ENCODE measurements at regions of chr14 and their contacts with region 1.

Region 1: DNA sequence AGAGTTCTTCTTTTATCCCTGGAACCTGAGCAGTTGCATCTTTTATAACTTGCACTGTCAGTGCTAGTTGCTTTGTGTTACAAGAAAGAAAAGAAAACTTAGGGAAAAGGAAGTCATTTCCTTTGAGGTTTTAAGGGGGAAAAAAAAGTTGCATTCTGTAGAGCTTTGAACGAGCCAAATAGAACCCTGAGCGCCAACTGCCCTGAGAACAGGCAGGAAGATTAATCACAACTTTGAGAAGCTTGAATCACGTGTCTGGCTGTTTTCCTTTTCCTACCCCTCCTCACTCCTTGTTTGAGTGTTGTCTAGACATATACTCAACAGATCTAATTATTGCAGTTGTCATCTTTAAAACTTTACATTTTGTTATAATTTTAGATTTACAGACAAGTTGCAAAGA is 12.5 kb downstream of the PCNX1 start:
- DNase-seq: peak in 1 of 9 donors; percentile 18
- ATAC-seq: peak; percentile 36
- H3K4me3 ChIP-seq: no peak overlapping the region
- H3K4me3 Mint-ChIP-seq: peak overlapping the region in 9 of 10 donors; percentile 43 to 80 (median 71)
- H3K27ac ChIP-seq: no peak overlapping the region
- H3K27ac Mint-ChIP-seq: peak overlapping the region; percentile 56 to 84 (median 77)
- H3K4me1 ChIP-seq: peaks cover 51 to 66% of the 10 kb centered on the region in 2 donors
- H3K4me1 Mint-ChIP-seq: peaks cover 55 to 99% (median 90%) of the 10 kb centered on the region in 7 donors
- H3K27me3 ChIP-seq: no peaks in the 10 kb centered on the region
- H3K27me3 Mint-ChIP-seq: no peaks in the 10 kb centered on the region

Region 2: GRCh38 chr14:70013269-70013873 is 906.4 kb before region 1 on chr14:
- CTCF ChIA-PET with region 1: no interaction called
- POLR2A ChIA-PET with region 1: no interaction called
- intact Hi-C with region 1: no loop called
- DNase-seq: peak in 1 of 9 donors; percentile 36
- ATAC-seq: no peak
- H3K4me3 ChIP-seq: no peak overlapping the region
- H3K4me3 Mint-ChIP-seq: no peak overlapping the region
- H3K27ac ChIP-seq: no peak overlapping the region
- H3K27ac Mint-ChIP-seq: no peak overlapping the region
- H3K4me1 ChIP-seq: no peaks in the 10 kb centered on the region
- H3K4me1 Mint-ChIP-seq: peaks cover 0 to 10% (median 5%) of the 10 kb centered on the region in 7 donors
- H3K27me3 ChIP-seq: no peaks in the 10 kb centered on the region
- H3K27me3 Mint-ChIP-seq: peaks cover 7 to 21% (median 14%) of the 10 kb centered on the region in 5 donors

Region 3: GRCh38 chr14:70254476-70254961 is 665.3 kb before region 1 on chr14:
- CTCF ChIA-PET with region 1: no interaction called
- POLR2A ChIA-PET with region 1: no interaction called
- intact Hi-C with region 1: no loop called
- DNase-seq: peak in 2 of 9 donors; percentile 1 to 11
- ATAC-seq: peak; percentile 54
- H3K4me3 ChIP-seq: no peak overlapping the region
- H3K4me3 Mint-ChIP-seq: peak overlapping the region in 6 of 10 donors; percentile 30 to 78 (median 36)
- H3K27ac ChIP-seq: no peak overlapping the region
- H3K27ac Mint-ChIP-seq: no peak overlapping the region
- H3K4me1 ChIP-seq: no peaks in the 10 kb centered on the region
- H3K4me1 Mint-ChIP-seq: peaks cover 4 to 15% (median 8%) of the 10 kb centered on the region in 7 donors
- H3K27me3 ChIP-seq: no peaks in the 10 kb centered on the region
- H3K27me3 Mint-ChIP-seq: peaks cover 61 to 73% (median 65%) of the 10 kb centered on the region in 5 donors

Region 4: GRCh38 chr14:70809543-70810244 is 110.1 kb before region 1 on chr14:
- CTCF ChIA-PET with region 1: no interaction called
- POLR2A ChIA-PET with region 1: no interaction called
- intact Hi-C with region 1: no loop called
- DNase-seq: peak; percentile 68 to 87 (median 78)
- ATAC-seq: peak; percentile 90
- H3K4me3 ChIP-seq: peak overlapping the region; percentile 73
- H3K4me3 Mint-ChIP-seq: peak overlapping the region in 1 of 10 donors; percentile 87
- H3K27ac ChIP-seq: peak overlapping the region; percentile 65
- H3K27ac Mint-ChIP-seq: peak overlapping the region in 6 of 9 donors; percentile 79 to 92 (median 88)
- H3K4me1 ChIP-seq: peaks cover 3 to 10% of the 10 kb centered on the region in 2 donors
- H3K4me1 Mint-ChIP-seq: peaks cover 9 to 17% (median 13%) of the 10 kb centered on the region in 7 donors
- H3K27me3 ChIP-seq: no peaks in the 10 kb centered on the region
- H3K27me3 Mint-ChIP-seq: peaks cover 0 to 9% (median 4%) of the 10 kb centered on the region in 5 donors

Region 5: DNA sequence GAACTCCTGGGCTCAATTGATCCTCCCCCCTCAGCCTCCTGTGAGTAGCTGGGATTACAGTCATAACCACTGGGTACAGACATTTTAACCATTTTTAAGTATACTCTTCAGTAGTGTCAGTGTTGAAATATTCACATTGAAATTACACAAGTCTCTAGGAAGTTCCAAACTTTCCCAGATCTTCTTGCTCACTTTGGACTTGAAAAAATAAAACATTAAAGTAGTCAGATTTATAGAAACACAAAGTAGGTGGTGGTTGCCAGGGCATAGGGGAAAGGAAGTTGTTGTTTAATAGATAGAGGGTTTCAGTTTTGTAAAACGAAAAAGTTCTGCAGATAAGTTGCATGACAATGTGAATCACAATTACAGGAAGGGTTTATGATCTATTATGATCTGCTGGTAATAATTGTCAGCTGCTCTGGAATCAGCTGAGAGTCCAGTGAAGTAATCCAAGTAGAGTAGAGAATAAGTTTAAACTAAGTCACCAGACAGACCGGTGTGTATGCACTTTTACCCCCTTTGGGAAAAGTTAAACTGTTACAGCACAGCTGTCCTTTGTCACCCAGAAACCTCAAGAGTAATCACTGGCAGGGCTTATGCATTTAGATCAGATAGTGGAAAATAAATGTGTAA is 14.8 kb after region 1 on chr14:
- CTCF ChIA-PET with region 1: no interaction called
- POLR2A ChIA-PET with region 1: interaction called, 13 read pairs
- intact Hi-C with region 1: loop called in 1 of 2 experiments (anchors 2 kb)
- DNase-seq: peak in 2 of 9 donors; percentile 19 to 32
- ATAC-seq: peak; percentile 70
- H3K4me3 ChIP-seq: peak overlapping the region; percentile 35
- H3K4me3 Mint-ChIP-seq: peak overlapping the region; percentile 12 to 81 (median 75)
- H3K27ac ChIP-seq: peak overlapping the region; percentile 19
- H3K27ac Mint-ChIP-seq: peak overlapping the region; percentile 77 to 93 (median 88)
- H3K4me1 ChIP-seq: peaks cover 29 to 32% of the 10 kb centered on the region in 2 donors
- H3K4me1 Mint-ChIP-seq: peaks cover 45 to 96% (median 87%) of the 10 kb centered on the region in 7 donors
- H3K27me3 ChIP-seq: no peaks in the 10 kb centered on the region
- H3K27me3 Mint-ChIP-seq: no peaks in the 10 kb centered on the region

Region 6: GRCh38 chr14:70942342-70942706 is 22.6 kb after region 1 on chr14:
- CTCF ChIA-PET with region 1: interaction called, 12 read pairs
- POLR2A ChIA-PET with region 1: interaction called, 16 read pairs
- intact Hi-C with region 1: loop called in 1 of 2 experiments (anchors 1 kb)
- DNase-seq: no peak
- ATAC-seq: no peak
- H3K4me3 ChIP-seq: no peak overlapping the region
- H3K4me3 Mint-ChIP-seq: peak overlapping the region in 9 of 10 donors; percentile 33 to 86 (median 58)
- H3K27ac ChIP-seq: peak overlapping the region; percentile 12
- H3K27ac Mint-ChIP-seq: peak overlapping the region; percentile 26 to 99 (median 91)
- H3K4me1 ChIP-seq: peaks cover 17 to 21% of the 10 kb centered on the region in 2 donors
- H3K4me1 Mint-ChIP-seq: peaks cover 47 to 86% (median 82%) of the 10 kb centered on the region in 7 donors
- H3K27me3 ChIP-seq: no peaks in the 10 kb centered on the region
- H3K27me3 Mint-ChIP-seq: no peaks in the 10 kb centered on the region